ENCODE measurements at regions of chr16 and their contacts with region 1.

Region 1: GRCh38 chr16:9713156-9713555 is 469.1 kb downstream of the GRIN2A start:
- DNase-seq: no peak
- ATAC-seq: no peak

Region 2: GRCh38 chr16:9787717-9788116 is 74.6 kb after region 1 on chr16:
- intact Hi-C with region 1: loop called (anchors 2 kb)
- DNase-seq: no peak
- ATAC-seq: no peak

Measured in sciatic nerve (tissue), 2 donors.